RWPE1 (cell line): ENCODE measurements at regions of chr11 and their contacts with region 1.

Region 1: DNA sequence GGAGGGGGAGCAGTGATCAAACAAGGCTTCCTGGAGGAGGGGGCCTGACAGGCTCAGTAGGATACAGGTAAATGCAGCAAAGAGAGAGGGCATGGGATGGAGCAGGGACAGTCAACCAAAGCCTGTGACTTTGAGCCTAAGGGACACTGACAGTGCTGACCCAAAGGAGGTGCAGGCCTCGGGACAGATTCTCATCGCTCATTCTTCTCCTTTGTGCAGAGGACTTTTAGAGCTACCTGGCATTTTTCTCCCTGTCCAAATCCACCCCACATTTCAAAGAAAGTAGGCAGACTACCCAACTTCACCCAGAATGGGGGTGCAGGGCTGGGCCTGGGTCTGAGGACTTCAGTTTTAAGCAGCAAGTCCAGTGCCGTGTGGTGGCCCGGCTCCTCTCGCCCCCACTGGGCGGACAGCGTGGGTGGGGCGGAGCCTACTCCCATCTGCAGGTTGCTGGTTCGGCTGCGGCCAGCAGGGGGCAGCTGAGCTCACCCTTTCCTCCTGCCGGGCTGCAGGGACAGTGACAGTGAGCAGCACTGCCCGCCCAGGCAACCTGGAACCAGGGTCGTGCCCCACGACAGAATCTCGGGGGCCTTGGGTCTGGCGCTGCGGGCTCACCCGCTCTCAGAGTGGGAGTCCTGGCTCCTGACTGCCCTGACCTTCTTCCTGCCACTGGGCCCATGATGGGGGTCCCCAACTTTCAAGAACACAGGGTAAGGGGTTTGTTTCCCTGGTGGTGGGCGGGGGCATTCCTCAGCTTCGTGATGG is 6.4 kb upstream of the NEAT1 start:
- DNase-seq: peak; percentile 84
- H3K27ac ChIP-seq: peak overlapping the region; percentile 100
- CTCF ChIP-seq: peak; percentile 95

Region 2: GRCh38 chr11:65391007-65391406 is 25.2 kb before region 1 on chr11:
- CTCF ChIA-PET with region 1: interaction called, 13 read pairs
- POLR2A ChIA-PET with region 1: no interaction called
- DNase-seq: no peak
- H3K27ac ChIP-seq: peak overlapping the region; percentile 100
- CTCF ChIP-seq: no peak

Region 3: DNA sequence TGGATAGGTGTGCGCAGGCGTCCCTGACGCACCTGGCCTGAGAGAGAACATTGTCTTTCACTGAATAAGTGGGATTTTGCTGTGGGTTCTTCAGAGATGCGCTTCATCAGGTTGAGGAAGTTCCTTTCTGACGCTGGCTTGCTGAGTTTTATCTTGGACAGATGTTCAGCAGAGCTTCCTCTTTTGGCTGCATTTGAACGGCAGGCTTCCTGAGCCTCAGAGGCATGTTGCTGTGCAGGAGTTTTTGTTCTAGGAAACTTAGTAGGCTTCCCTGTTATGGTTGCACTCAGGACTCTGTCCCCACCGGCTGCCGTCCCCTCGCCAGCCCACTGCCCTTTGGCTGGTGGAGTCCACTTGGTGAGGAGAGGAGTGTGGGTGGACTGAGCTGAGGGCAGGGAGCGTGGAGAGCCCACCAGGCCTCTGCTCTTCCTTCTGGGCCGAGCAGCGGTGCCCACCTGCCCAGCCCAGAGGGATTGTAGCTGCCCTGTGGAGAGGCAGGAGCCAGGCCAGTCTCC is 12.6 kb before region 1 on chr11:
- CTCF ChIA-PET with region 1: interaction called, 19 read pairs
- POLR2A ChIA-PET with region 1: no interaction called
- DNase-seq: no peak
- H3K27ac ChIP-seq: peak overlapping the region; percentile 32
- CTCF ChIP-seq: no peak

Region 4: GRCh38 chr11:65485920-65486219 is 69.6 kb after region 1 on chr11:
- CTCF ChIA-PET with region 1: no interaction called
- POLR2A ChIA-PET with region 1: no interaction called
- DNase-seq: no peak
- H3K27ac ChIP-seq: peak overlapping the region; percentile 99
- CTCF ChIP-seq: no peak